Mammary epithelial cell (primary cell): ENCODE measurements at regions of chr5 and their contacts with region 1.

Region 1: DNA sequence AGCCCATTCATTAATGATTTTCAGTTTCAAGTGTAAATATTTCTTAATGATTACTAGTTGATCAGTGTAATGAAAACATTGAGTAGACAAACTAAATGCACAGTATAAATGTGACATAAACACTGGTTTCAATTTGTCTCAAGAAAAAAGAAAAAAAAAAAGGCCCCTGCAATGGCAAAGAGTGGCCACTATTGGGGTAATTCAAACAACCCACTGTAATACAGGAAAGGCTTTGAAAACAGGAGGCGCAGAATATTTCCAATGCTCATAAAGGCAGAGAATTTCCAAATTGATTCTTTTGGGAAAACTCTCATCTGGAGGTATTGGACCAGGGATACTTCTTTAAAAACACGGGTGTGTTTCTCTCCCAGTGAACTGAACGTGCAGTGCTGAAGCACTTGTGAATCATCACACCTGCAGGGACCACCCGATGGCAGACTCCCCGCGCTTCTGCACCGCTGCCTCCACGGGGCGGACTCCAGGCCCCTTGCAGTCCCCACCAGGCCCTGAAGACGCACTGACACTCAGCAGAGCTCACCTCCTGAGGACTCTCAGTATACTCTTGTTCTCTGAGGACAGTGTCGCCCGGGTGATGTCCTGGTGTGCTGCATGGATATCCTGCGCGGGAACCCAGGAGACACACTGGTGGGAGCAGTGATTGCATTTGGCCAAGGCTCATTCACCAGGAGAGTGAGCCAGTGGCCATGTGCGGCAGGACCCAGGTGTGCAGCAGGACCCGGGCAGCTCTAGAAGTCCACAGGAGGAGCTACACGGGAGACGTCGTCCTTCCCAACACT is 227.6 kb upstream of the IRX4 start:
- DNase-seq: no peak
- H3K4me3 ChIP-seq: no peak overlapping the region
- H3K27ac ChIP-seq: no peak overlapping the region
- H3K4me1 ChIP-seq: no peaks in the 10 kb centered on the region
- H3K27me3 ChIP-seq: no peaks in the 10 kb centered on the region
- CTCF ChIP-seq: no peak

Region 2: GRCh38 chr5:1851290-1851934 is 258.9 kb before region 1 on chr5:
- CTCF ChIA-PET with region 1: no interaction called
- dilution Hi-C with region 1: no loop called
- in situ Hi-C with region 1: no loop called
- intact Hi-C with region 1: no loop called
- DNase-seq: no peak
- H3K4me3 ChIP-seq: no peak overlapping the region
- H3K27ac ChIP-seq: no peak overlapping the region
- H3K4me1 ChIP-seq: peaks cover 3% of the 10 kb centered on the region
- H3K27me3 ChIP-seq: no peaks in the 10 kb centered on the region
- CTCF ChIP-seq: no peak

Region 3: GRCh38 chr5:2007878-2008501 is 102.3 kb before region 1 on chr5:
- CTCF ChIA-PET with region 1: no interaction called
- dilution Hi-C with region 1: loop called (anchors 5 kb)
- in situ Hi-C with region 1: no loop called
- intact Hi-C with region 1: no loop called
- DNase-seq: peak; percentile 14
- H3K4me3 ChIP-seq: peak overlapping the region; percentile 14 to 21 (median 21)
- H3K27ac ChIP-seq: peak overlapping the region; percentile 31
- H3K4me1 ChIP-seq: peaks cover 16% of the 10 kb centered on the region
- H3K27me3 ChIP-seq: peaks cover 3% of the 10 kb centered on the region
- CTCF ChIP-seq: no peak

Region 4: GRCh38 chr5:2169850-2170760 is 59.8 kb after region 1 on chr5:
- CTCF ChIA-PET with region 1: no interaction called
- dilution Hi-C with region 1: loop called (anchors 5 kb)
- in situ Hi-C with region 1: no loop called
- intact Hi-C with region 1: no loop called
- DNase-seq: no peak
- H3K4me3 ChIP-seq: no peak overlapping the region
- H3K27ac ChIP-seq: no peak overlapping the region
- H3K4me1 ChIP-seq: no peaks in the 10 kb centered on the region
- H3K27me3 ChIP-seq: no peaks in the 10 kb centered on the region
- CTCF ChIP-seq: no peak